HepG2 (cell line): ENCODE measurements at regions of chr22 and their contacts with region 1.

Region 1: DNA sequence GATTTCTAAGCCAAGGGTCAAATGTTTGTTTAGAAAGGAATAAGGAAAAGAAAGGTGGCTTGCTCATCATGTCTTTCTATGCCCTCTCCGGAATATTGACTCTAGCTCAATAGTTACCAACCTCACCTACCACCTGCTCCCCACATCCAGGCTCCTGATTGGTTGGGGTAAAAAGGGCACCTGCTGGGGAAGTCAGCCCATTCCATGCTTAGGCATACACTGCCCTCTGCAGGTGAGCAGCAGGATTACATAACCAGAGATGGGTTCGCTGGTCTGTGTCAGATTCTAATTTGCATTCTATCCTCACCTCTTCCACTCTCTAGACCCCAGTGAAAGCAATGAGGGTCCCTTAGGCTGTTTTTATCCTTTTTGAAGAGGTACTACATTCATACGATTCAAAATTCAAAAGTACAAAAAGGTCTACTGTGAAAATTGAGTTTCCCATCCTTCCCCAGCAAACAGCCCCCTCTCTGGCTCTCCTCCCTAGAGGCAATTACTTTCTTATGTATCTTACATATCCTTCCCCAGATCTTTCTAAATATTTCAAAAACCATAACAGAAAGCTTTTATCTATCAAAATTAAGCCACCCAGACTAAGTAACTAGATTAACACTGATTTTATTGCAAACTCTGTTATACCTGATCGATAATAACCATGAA is 98.0 kb upstream of the ASPHD2 start:
- DNase-seq: peak; percentile 54
- ATAC-seq: peak; percentile 82
- H3K4me3 ChIP-seq: no peak overlapping the region
- H3K27ac ChIP-seq: no peak overlapping the region
- H3K4me1 ChIP-seq: no peaks in the 10 kb centered on the region
- H3K27me3 ChIP-seq: peaks cover 0 to 33% of the 10 kb centered on the region in 2 experiments; a peak in 4 of 5 replicates
- CTCF ChIP-seq: peak; percentile 91
- EP300 ChIP-seq: no peak
- POLR2A ChIP-seq: no peak
- RAD21 ChIP-seq: peak; percentile 83

Region 2: GRCh38 chr22:25774575-25775026 is 556.5 kb before region 1 on chr22:
- CTCF ChIA-PET with region 1: interaction called, 13 read pairs
- POLR2A ChIA-PET with region 1: no interaction called
- in situ Hi-C with region 1: loop called (anchors 5 kb)
- intact Hi-C with region 1: no loop called
- DNase-seq: no peak
- ATAC-seq: peak; percentile 77
- H3K4me3 ChIP-seq: no peak overlapping the region
- H3K27ac ChIP-seq: no peak overlapping the region
- H3K4me1 ChIP-seq: 0 out of 2 replicates have a peak, but pooled peaks cover 6% of the 10 kb centered on the region
- H3K27me3 ChIP-seq: peaks cover 2 to 18% of the 10 kb centered on the region in 2 experiments; a peak in 3 of 5 replicates
- CTCF ChIP-seq: peak; percentile 91
- EP300 ChIP-seq: no peak
- POLR2A ChIP-seq: no peak
- RAD21 ChIP-seq: peak; percentile 60

Region 3: DNA sequence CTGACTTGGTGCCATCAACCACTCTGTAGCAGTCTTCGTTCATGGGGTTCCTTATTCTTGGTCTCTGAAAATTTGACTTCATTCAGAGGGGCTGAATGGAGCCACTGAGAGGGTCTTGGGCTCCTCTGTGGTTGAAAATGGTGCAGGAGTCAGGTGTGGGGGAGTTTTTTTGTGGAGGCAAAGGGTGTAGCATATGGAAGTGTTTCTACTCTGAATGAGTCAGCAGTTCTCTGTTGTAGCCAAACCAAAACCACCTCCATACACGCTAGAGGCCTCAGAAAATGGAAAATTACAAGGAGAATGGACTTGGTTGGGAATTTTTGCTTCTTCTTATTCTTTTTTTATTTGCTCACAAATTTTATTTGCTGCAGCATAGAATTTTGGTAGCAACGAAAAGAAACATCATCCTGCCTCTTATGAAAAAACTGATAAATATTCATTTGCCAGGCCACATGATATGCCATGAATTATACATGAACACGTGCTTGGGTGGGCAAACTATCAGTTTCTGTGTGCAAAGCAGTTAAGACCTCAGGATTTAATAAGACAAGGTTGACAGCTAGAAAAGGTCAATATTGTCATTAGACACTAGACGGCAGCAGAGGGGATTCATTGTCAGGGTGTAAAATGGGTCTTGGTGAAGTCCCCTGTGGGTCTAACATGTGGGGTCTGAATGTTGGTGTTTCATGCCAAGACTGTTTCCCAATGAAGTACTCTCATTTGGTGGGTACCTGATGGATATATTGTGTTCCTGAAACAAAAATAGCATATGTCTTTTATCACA is 477.4 kb before region 1 on chr22:
- CTCF ChIA-PET with region 1: no interaction called
- POLR2A ChIA-PET with region 1: no interaction called
- in situ Hi-C with region 1: no loop called
- intact Hi-C with region 1: loop called (anchors 2 kb)
- DNase-seq: peak; percentile 18
- ATAC-seq: no peak
- H3K4me3 ChIP-seq: no peak overlapping the region
- H3K27ac ChIP-seq: no peak overlapping the region
- H3K4me1 ChIP-seq: no peaks in the 10 kb centered on the region
- H3K27me3 ChIP-seq: peaks cover 0 to 2% of the 10 kb centered on the region in 2 experiments; a peak in 2 of 5 replicates
- CTCF ChIP-seq: peak; percentile 46
- EP300 ChIP-seq: no peak
- POLR2A ChIP-seq: no peak
- RAD21 ChIP-seq: no peak

Region 4: GRCh38 chr22:25898689-25899365 is 432.3 kb before region 1 on chr22:
- CTCF ChIA-PET with region 1: interaction called, 12 read pairs
- POLR2A ChIA-PET with region 1: no interaction called
- in situ Hi-C with region 1: loop called (anchors 5 kb)
- intact Hi-C with region 1: loop called (anchors 1 kb)
- DNase-seq: peak; percentile 9
- ATAC-seq: no peak
- H3K4me3 ChIP-seq: no peak overlapping the region
- H3K27ac ChIP-seq: no peak overlapping the region
- H3K4me1 ChIP-seq: no peaks in the 10 kb centered on the region
- H3K27me3 ChIP-seq: no peaks in the 10 kb centered on the region
- CTCF ChIP-seq: 0 out of 2 replicates have a peak, but pooled peaks have one; percentile 22
- EP300 ChIP-seq: no peak
- POLR2A ChIP-seq: no peak
- RAD21 ChIP-seq: no peak

Region 5: DNA sequence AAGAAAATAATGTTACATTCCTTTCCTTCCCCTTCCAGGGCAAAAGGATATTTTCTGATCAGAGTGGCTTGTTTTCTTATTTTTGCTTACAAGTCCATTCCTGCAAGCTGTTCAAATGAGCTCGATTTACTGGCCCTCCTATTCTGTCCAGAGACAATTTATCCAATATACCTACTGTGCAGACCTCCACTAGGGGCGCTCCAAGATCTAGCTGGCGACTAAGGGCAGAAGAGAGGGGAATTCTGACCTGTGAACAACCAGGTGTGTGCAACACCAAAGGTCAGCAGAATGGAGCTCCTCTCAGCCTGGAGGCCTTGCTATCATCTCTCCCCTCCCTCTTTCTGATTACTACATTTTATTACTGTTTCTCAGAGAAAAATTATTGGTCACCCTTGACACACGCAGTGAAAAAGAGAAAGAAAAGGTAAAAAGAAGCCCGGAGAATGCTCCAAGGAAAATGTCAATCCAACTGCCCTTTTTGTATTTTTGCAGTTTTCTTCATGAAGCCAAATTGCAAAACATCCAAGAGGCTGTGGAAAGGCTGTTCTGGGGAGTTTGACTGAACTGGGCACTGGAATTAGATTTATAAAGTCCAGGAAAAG is 158.6 kb before region 1 on chr22:
- CTCF ChIA-PET with region 1: interaction called, 7 read pairs
- POLR2A ChIA-PET with region 1: no interaction called
- in situ Hi-C with region 1: no loop called
- intact Hi-C with region 1: loop called (anchors 1 kb)
- DNase-seq: peak; percentile 53
- ATAC-seq: peak; percentile 84
- H3K4me3 ChIP-seq: no peak overlapping the region
- H3K27ac ChIP-seq: no peak overlapping the region
- H3K4me1 ChIP-seq: no peaks in the 10 kb centered on the region
- H3K27me3 ChIP-seq: peaks cover 4 to 27% of the 10 kb centered on the region in 2 experiments; a peak in 4 of 5 replicates
- CTCF ChIP-seq: peak; percentile 72
- EP300 ChIP-seq: no peak
- POLR2A ChIP-seq: no peak
- RAD21 ChIP-seq: peak; percentile 53

Region 6: GRCh38 chr22:26354707-26355106 is 23.6 kb after region 1 on chr22:
- CTCF ChIA-PET with region 1: no interaction called
- POLR2A ChIA-PET with region 1: no interaction called
- in situ Hi-C with region 1: no loop called
- intact Hi-C with region 1: no loop called
- DNase-seq: no peak
- ATAC-seq: no peak
- H3K4me3 ChIP-seq: no peak overlapping the region
- H3K27ac ChIP-seq: no peak overlapping the region
- H3K4me1 ChIP-seq: no peaks in the 10 kb centered on the region
- H3K27me3 ChIP-seq: peaks cover 0 to 22% of the 10 kb centered on the region in 2 experiments; a peak in 3 of 5 replicates
- CTCF ChIP-seq: no peak
- EP300 ChIP-seq: no peak
- POLR2A ChIP-seq: no peak
- RAD21 ChIP-seq: no peak